ENCODE measurements at regions of chrX and their contacts with region 1.

Region 1: DNA sequence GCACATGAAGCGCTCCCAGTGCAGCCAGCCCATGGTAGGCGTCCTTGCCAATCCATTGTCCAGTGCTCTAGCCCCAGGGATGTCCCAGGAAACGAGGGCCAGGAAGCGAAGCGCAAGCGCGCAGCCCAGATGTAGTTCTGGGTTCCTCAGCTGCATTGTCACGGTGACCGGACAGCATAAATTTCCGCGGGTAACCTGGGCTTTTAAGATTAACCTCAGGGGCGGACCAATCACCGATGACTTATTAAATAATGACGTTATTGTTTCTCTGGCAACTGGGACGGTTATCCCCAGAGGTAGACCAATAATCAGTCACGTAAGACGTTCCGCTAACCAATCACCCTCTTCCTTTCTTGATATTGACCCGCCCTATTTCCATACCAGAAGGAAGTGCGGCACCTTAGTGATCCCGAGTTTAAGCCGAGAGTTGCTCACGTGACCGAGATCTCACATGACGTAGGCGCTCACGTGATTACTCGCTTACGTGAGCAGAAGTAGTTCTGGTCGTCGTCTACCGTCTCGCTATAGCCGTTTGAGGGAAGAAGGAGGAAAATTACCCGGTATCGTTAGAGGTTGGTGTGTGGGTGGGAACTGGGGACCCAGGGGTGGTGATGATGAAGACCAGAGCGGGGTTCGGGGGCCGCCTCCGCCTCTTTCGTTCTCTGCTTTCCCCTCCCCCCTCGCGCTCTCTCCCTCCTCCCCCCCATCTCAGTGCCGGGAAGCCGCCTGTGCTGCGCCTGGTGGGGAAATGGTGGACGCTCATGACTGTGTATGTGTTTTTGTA is at the starts of genes GLA and HNRNPH2:
- DNase-seq: peak; percentile 85
- H3K4me3 Mint-ChIP-seq: peak within 1 kb of the TSS; percentile 99
- H3K27ac Mint-ChIP-seq: peak within 1 kb of the TSS; percentile 94
- H3K4me1 Mint-ChIP-seq: peaks cover 16% of the 10 kb centered on the region
- H3K27me3 Mint-ChIP-seq: no peaks in the 10 kb centered on the region
- total RNA-seq, gene GLA: 82.9 and 89.1 TPM in 2 replicates
- total RNA-seq, gene HNRNPH2: 17.5 and 18.0 TPM in 2 replicates

Region 2: GRCh38 chrX:101348452-101349192 is 59.3 kb before region 1 on chrX and contains the start of gene TIMM8A:
- intact Hi-C with region 1: loop called (anchors 1 kb)
- DNase-seq: peak; percentile 71
- H3K4me3 Mint-ChIP-seq: peak within 1 kb of the TSS; percentile 88
- H3K27ac Mint-ChIP-seq: peak within 1 kb of the TSS; percentile 84
- H3K4me1 Mint-ChIP-seq: peaks cover 10% of the 10 kb centered on the region
- H3K27me3 Mint-ChIP-seq: no peaks in the 10 kb centered on the region
- total RNA-seq, gene TIMM8A: 25.5 and 27.9 TPM in 2 replicates

Region 3: DNA sequence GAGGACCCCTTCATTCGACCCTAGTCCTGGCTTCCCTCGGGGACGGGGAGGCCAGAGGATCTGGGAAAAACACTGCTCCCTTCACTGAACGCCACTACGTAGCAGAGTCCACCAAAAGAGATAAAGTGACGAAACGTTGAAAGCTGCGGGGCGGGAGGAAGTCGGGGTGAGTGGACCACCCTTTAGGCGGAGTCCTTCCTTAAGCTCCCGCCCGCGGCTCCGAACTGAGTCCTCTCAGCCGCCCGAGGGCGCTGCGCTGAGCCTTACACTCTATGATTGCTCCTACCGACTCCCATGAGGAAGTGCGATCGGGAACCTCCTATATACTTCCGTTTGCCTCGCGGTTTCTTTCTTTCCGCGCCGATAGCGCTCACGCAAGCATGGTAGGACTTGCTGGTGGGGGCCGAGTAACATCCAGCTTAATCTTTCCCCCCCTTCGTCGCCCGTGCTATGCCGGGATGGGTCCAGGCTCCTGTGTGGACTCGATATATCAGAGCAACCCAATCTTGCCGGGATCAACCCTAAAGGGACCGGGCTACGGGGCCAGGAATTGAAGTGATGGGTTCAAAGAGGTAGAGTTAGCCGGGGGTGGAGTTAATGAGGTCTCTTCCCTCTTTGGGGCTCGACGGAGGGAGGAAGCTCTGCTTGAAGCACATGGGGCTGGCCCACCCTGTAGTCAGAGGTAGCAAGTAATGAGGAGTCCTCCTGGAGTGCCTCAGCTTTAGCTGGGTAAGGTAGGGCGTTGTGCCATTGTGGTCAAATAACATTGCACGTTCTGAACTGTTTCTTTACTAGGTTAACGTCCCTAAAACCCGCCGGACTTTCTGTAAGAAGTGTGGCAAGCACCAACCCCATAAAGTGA is 17.0 kb before region 1 on chrX and contains the start of gene RPL36A:
- intact Hi-C with region 1: loop called (anchors 1 kb)
- DNase-seq: peak; percentile 71
- H3K4me3 Mint-ChIP-seq: peak within 1 kb of the TSS; percentile 95
- H3K27ac Mint-ChIP-seq: peak within 1 kb of the TSS; percentile 94
- H3K4me1 Mint-ChIP-seq: peaks cover 18% of the 10 kb centered on the region
- H3K27me3 Mint-ChIP-seq: no peaks in the 10 kb centered on the region
- total RNA-seq, gene RPL36A: 290 and 376 TPM in 2 replicates

Region 4: DNA sequence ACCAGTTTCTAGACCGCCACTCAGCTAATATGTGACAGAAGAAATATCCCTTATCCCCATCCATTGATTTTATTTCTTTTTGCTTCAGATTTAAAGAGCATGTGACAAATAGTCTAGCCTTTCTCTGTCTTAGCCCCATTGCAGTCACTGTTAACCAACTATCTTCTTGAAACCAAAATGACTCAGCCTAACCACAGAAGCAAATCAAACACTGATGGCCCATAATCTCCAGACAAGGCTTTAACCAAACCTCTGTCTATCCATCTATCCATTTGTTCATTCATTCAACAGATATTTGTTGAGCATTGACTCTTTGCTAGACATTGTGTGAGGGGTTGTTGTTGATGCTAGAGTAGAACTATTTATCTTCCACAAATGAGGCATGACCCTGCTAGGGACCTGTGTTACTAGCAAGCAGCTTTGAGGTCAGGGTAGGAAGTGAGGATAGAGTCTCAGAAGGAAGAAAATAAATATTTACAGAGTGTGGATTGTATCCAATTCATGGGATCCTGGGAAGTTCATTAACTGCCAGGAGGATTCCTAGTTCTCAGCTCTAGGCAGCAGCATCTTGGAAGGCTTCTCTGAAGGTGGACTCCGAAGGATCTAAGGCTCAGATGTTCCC is 22.6 kb after region 1 on chrX:
- intact Hi-C with region 1: loop called (anchors 2 kb)
- DNase-seq: no peak
- H3K4me3 Mint-ChIP-seq: peak overlapping the region; percentile 28
- H3K27ac Mint-ChIP-seq: peak overlapping the region; percentile 86
- H3K4me1 Mint-ChIP-seq: peaks cover 15% of the 10 kb centered on the region
- H3K27me3 Mint-ChIP-seq: no peaks in the 10 kb centered on the region

Measured in activated T-helper 2 cell treated with anti-CD3 and anti-CD28 coated beads, Interferon-gamma antibody, Interleukin-2, Interleukin-4, amounts not matched to agents 10 μg/mL and 5 μg/mL and 100 μg/mL, durations not matched to agents 14 hours and 24 hours and 36 hours (primary cell).